Sciatic nerve (tissue), 2 donors: ENCODE measurements at regions of chr6 and their contacts with region 1.

Region 1: DNA sequence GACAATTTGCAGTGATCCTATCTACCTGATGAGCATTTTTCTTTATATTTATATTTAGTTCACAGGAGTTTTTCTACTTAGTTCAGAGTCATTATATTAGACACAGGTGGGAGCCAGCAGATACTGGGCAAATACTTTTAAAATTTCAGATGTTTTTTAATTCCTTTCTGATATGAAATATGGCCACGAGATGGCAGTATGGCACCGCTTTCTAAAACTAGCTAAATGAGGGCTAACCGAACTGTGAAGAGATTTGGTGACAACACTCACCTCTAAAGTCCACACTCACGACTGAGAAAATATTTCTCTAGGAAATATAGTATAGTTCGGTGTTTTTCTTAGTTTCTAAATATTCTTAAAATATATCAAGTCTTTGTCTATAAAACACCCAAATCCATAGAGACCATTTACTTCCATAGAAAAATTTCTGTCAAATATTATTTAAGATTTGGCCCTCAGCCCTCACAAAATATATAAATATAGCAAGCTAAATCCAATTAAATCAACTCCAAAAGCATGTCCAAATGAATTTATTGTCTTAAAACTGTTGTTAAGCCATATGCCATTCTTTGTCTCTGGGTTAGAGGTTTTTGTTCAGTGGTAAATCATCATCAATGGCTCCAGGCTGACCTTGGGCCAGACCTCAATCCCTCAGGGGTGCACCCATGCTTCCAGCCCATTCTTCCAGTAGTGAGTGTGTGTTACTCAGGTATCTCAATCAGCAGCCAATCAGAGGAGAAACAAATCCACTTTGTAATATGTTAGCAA is 63.6 kb downstream of the HUS1B start:
- DNase-seq: peak; percentile 73
- ATAC-seq: peak; percentile 76

Region 2: GRCh38 chr6:1396952-1397868 is 803.9 kb after region 1 on chr6:
- intact Hi-C with region 1: loop called (anchors 10 kb)
- DNase-seq: peak; percentile 79
- ATAC-seq: peak; percentile 63